PC-3 (cell line): ENCODE measurements at regions of chr5 and their contacts with region 1.

Region 1: DNA sequence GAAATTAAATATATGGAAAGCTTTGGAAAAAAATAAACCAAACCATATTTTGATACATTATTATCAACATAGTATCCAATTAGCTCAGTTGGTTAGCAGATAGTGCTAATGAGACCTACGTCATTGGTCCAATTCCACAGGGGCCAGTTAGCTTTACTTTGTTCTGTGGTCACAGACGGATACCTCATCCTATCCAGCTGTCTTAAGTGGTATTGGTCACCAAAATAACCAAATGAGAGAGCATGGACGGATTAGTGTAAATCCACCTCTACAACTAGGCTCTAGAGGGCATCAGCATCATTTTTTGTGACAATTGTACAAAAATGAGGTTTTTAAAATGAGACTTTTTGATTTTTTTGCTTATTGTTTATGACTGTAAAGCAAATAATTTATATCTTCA is 364.2 kb downstream of the KIAA0825 start:
- DNase-seq: no peak
- ATAC-seq: peak; percentile 42; the same call in 1 of the 2 replicates
- H3K4me3 ChIP-seq: no peak overlapping the region
- H3K27ac ChIP-seq: no peak overlapping the region
- H3K4me1 ChIP-seq: no peaks in the 10 kb centered on the region
- H3K27me3 ChIP-seq: no peaks in the 10 kb centered on the region
- CTCF ChIP-seq: peak; percentile 29; the same call in 1 of the 2 replicates

Region 2: GRCh38 chr5:94228404-94229190 is 25.6 kb before region 1 on chr5:
- CTCF ChIA-PET with region 1: no interaction called
- POLR2A ChIA-PET with region 1: no interaction called
- intact Hi-C with region 1: no loop called
- DNase-seq: peak; percentile 57
- ATAC-seq: peak; percentile 45
- H3K4me3 ChIP-seq: no peak overlapping the region
- H3K27ac ChIP-seq: 0 out of 2 replicates have a peak overlapping the region, but pooled peaks have one; percentile 2
- H3K4me1 ChIP-seq: peaks cover 12% of the 10 kb centered on the region
- H3K27me3 ChIP-seq: no peaks in the 10 kb centered on the region
- CTCF ChIP-seq: no peak

Region 3: DNA sequence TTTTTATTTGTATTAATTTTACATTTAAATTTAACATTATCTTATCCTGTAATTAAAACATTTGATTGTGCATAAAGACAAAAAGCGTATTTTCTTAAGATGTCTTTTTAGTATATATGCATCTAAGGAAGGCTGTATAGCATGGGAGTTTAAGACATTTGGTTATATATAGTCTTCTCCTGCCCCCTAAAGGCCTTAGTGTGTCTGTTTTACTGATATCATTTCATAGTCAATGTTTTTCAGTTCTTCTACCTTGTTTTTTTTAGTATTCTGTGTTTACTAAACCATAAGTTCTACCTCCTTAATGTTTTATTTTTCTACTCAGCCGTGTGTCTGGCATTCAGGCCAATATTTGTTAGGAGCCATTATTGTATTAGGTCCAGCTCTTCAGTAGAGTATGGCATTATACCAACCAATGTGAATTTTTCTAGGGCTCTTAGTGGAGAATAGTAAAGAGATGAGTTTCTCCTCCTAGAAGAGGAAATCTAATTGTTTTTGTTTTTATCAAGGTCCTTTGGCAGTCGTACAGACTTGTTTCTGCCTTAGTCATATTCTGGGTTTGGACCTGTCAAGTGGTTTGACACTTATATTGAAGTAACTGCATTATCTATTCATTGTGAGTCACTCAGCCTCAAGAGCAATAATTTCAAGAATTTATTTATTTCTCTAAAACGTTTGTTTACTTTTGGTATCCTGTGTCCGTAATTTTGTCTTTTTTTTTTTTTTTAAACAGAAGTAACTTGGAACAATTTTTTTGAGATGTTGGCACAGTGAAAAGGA is 439.0 kb after region 1 on chr5:
- CTCF ChIA-PET with region 1: no interaction called
- POLR2A ChIA-PET with region 1: no interaction called
- intact Hi-C with region 1: loop called (anchors 10 kb)
- DNase-seq: peak; percentile 70
- ATAC-seq: peak; percentile 88
- H3K4me3 ChIP-seq: no peak overlapping the region
- H3K27ac ChIP-seq: peak overlapping the region; percentile 34; the same call in 1 of the 2 replicates
- H3K4me1 ChIP-seq: peaks cover 15% of the 10 kb centered on the region
- H3K27me3 ChIP-seq: no peaks in the 10 kb centered on the region
- CTCF ChIP-seq: peak; percentile 56

Region 4: DNA sequence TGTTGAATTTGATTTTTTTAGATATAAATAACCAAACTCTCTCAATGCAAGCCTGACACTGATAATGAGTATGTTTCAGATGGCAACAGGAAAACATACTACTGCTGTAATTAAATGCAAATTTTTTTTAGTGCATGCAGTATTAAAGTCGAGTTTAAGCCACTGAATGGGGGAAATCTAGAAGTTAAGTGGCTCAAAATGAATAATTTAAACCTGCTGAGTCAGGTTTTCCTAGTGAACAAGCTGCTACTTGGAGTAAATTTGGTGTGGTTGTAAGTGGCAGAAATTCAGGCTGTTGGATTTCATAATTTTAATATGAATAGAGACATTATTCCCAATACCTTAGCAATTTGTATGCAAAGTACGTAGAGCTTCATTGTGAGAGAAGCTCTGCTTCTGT is 486.1 kb after region 1 on chr5:
- CTCF ChIA-PET with region 1: no interaction called
- POLR2A ChIA-PET with region 1: no interaction called
- intact Hi-C with region 1: loop called (anchors 5 kb)
- DNase-seq: no peak
- ATAC-seq: no peak
- H3K4me3 ChIP-seq: no peak overlapping the region
- H3K27ac ChIP-seq: no peak overlapping the region
- H3K4me1 ChIP-seq: no peaks in the 10 kb centered on the region
- H3K27me3 ChIP-seq: no peaks in the 10 kb centered on the region
- CTCF ChIP-seq: no peak

Region 5: GRCh38 chr5:94793113-94793815 is 539.0 kb after region 1 on chr5:
- CTCF ChIA-PET with region 1: no interaction called
- POLR2A ChIA-PET with region 1: interaction called, 12 read pairs
- intact Hi-C with region 1: no loop called
- DNase-seq: peak; percentile 15
- ATAC-seq: peak; percentile 68
- H3K4me3 ChIP-seq: no peak overlapping the region
- H3K27ac ChIP-seq: peak overlapping the region; percentile 26; the same call in 1 of the 2 replicates
- H3K4me1 ChIP-seq: peaks cover 6% of the 10 kb centered on the region
- H3K27me3 ChIP-seq: no peaks in the 10 kb centered on the region
- CTCF ChIP-seq: no peak